Calu3 (cell line): ENCODE measurements at regions of chr3 and their contacts with region 1.

Region 1: GRCh38 chr3:50652709-50653108 is 22.0 kb upstream of the DOCK3 start:
- DNase-seq: peak; percentile 78
- H3K4me3 Mint-ChIP-seq: no peak overlapping the region
- H3K27ac Mint-ChIP-seq: no peak overlapping the region
- H3K4me1 Mint-ChIP-seq: no peaks in the 10 kb centered on the region
- H3K27me3 Mint-ChIP-seq: peaks cover 3% of the 10 kb centered on the region
- CTCF ChIP-seq: peak; percentile 76

Region 2: DNA sequence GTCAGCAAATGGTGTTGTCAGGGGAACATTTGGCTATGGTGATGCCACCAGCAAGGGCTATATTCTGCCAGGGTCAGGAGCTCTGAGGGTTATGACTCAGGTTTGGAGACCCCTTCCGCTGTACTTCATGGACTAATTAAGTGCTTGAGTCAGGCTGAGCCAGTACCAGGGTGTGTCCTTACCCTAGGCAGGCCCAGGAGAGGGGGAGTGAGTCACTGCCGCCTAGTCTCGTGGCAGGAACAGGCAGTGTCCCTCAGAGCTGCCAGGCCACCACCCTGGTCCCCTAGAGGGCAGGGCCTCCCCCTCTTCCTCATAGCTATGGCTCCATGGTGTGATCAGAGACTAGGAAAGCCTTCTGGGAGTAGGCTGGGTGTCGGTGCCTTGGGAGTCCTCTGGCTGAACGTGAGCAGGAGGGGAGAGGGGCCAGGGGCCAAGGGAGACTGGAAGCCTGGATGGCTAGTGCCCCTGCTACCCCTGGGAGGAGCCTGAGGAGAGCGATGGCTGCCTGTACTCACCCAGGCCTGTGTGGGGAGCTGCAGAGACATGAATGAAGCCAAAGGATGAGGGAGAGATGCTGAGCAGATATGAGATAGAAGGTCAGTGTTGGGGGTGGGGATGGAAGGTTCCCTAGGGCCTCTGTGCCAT is 25.2 kb before region 1 on chr3:
- CTCF ChIA-PET with region 1: interaction called, 16 read pairs
- intact Hi-C with region 1: no loop called
- DNase-seq: peak; percentile 85
- H3K4me3 Mint-ChIP-seq: peak overlapping the region; percentile 59
- H3K27ac Mint-ChIP-seq: peak overlapping the region; percentile 92
- H3K4me1 Mint-ChIP-seq: peaks cover 56% of the 10 kb centered on the region
- H3K27me3 Mint-ChIP-seq: no peaks in the 10 kb centered on the region
- CTCF ChIP-seq: no peak